H1 (cell line): ENCODE measurements at regions of chr18 and their contacts with region 1.

Region 1: DNA sequence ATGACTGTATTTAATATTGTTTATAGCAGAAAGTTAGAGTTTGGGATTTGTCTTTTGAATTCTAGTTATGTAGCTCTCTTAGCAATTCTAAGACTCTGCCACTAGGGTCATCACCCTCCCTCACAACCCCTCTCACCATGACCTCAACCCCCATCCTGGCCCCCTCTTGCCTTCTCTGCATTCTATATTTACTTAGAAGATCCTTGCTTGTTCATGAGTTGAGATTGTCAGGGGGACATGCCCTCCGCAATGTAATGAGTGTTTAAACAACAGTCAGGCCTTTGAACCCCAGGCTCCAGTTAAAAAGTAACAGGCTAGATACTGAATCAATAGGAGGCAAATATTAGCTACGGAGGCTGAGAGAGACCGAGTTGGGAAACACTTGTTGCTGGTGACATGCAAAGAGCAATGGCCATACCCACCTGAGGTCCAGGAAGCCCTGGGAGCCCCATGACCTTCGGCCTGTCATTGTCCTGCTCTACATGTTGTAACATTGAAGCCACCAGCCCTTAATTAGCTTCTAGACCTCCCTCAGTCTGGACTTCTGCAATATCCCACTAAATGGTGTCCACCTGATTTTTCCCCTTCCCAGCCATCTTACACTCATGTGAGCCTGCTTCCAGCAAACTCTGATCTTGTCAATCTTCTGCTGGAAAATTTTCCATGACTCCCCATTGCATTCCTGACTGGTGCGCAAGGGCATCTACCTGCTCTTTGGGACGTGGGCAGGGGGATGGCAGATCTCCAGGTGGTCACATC is 221.1 kb downstream of the ALPK2 start:
- DNase-seq: no peak
- H3K4me3 ChIP-seq: no peak overlapping the region
- H3K27ac ChIP-seq: no peak overlapping the region
- H3K4me1 ChIP-seq: peaks cover 0 to 3% (median 1%) of the 10 kb centered on the region in 4 experiments; a peak in 5 of 7 replicates
- H3K27me3 ChIP-seq: no peaks in the 10 kb centered on the region
- CTCF ChIP-seq: peak; percentile 1 to 28 (median 15); a peak in 3 of 4 replicates
- EP300 ChIP-seq: no peak
- POLR2A ChIP-seq: no peak
- RAD21 ChIP-seq: peak in 1 of 2 experiments; percentile 31; a peak in 1 of 4 replicates

Region 2: DNA sequence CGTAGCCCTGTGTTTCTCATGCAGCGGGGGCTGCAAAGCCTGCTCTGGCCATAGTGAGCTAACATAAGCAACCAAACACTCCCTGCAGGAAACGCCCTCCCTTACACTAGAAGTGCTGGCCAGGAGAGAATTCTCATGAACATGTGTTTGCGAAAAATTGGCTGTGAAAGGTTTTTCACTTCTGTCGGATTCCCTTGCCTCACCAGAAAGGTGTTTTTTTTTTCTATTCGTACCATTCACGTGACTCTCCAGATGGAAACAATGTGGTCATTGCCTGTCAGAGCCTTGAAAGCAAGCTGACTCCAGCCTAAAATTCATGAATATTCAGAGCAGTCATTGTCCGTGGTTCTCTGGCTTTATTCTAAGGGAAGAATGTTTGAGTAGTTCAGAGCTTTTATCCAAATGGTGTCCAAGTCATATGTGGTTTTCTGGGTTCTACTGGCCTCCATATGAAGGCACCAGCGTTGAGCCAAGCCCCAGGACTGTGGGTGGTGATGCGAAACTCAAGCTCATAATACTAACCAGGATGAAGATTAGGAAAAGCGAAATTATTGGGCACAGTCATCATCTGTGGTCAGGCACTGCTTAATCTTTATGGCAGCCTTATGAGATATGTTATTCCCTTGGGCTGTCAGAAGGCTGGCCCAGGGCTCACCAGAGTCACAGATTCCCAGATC is 15.4 kb before region 1 on chr18:
- CTCF ChIA-PET with region 1: interaction called, 16 read pairs
- POLR2A ChIA-PET with region 1: no interaction called
- DNase-seq: no peak
- H3K4me3 ChIP-seq: no peak overlapping the region
- H3K27ac ChIP-seq: no peak overlapping the region
- H3K4me1 ChIP-seq: peaks cover 0 to 7% (median 0%) of the 10 kb centered on the region in 4 experiments; a peak in 3 of 7 replicates
- H3K27me3 ChIP-seq: no peaks in the 10 kb centered on the region
- CTCF ChIP-seq: no peak
- EP300 ChIP-seq: no peak
- POLR2A ChIP-seq: no peak
- RAD21 ChIP-seq: no peak

Region 3: DNA sequence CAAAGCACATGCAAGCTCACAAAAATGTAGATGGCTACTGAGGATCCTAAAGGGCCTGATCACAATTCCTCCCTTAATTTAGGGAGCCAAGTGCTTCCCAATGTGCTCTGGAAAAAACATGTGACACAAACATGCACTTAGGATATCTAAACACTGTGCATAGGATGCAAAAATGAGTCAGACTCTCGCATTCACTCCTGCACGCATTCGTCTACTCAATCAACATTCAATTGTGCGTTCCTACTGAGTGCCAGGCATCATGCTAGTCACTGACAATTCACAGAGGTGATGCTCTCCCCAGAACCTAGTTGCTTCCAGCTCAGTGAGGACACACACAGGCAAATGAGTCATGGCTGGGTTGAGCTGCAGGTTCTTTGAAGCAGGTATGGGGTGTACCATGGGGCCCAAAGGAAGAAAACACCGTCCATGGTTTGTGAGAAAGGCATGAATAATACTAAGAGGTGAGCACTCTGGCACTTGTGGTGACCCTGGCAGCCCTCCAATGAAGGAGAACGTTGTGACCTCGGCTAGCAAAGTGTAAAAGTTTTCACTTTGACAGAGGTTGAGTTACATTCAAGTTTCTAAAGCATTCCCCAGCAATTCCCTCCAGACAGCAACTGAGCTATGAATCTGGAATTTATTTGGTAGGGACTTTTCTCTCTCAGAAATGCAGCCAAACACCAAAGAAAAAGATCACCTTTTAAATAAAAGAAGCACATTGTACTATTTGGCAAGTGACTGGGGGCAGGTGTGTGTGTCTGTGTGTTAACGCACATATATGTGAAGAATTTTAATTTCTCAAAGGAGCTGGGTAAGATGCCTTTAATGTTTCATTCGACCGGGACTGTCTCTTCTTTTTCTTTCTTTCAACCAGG is 47.7 kb after region 1 on chr18:
- CTCF ChIA-PET with region 1: interaction called, 16 read pairs
- POLR2A ChIA-PET with region 1: no interaction called
- DNase-seq: no peak
- H3K4me3 ChIP-seq: no peak overlapping the region
- H3K27ac ChIP-seq: no peak overlapping the region
- H3K4me1 ChIP-seq: no peaks in the 10 kb centered on the region
- H3K27me3 ChIP-seq: no peaks in the 10 kb centered on the region
- CTCF ChIP-seq: no peak
- EP300 ChIP-seq: no peak
- POLR2A ChIP-seq: no peak
- RAD21 ChIP-seq: no peak